HepG2 (cell line): ENCODE measurements at regions of chr17 and their contacts with region 1.

Region 1: GRCh38 chr17:75845049-75845860 is 1.1 kb upstream of the UNC13D start:
- DNase-seq: peak; percentile 86
- ATAC-seq: peak; percentile 65
- H3K4me3 ChIP-seq: peak overlapping the region; percentile 66 to 84 (median 66)
- H3K27ac ChIP-seq: peak overlapping the region; percentile 79
- H3K4me1 ChIP-seq: peaks cover 70% of the 10 kb centered on the region
- H3K27me3 ChIP-seq: no peaks in the 10 kb centered on the region
- CTCF ChIP-seq: peak; percentile 90
- EP300 ChIP-seq: peak in 1 of 2 experiments; percentile 31; a peak in 1 of 4 replicates
- POLR2A ChIP-seq: peak in 1 of 2 experiments; percentile 67; a peak in 2 of 4 replicates
- RAD21 ChIP-seq: peak; percentile 82

Region 2: GRCh38 chr17:75764711-75765421 is 80.4 kb before region 1 on chr17 and contains the start of gene GALK1:
- CTCF ChIA-PET with region 1: no interaction called
- POLR2A ChIA-PET with region 1: interaction called, 17 read pairs
- in situ Hi-C with region 1: no loop called
- intact Hi-C with region 1: no loop called
- DNase-seq: peak; percentile 59
- ATAC-seq: peak; percentile 73
- H3K4me3 ChIP-seq: peak within 1 kb of the TSS; percentile 77 to 87 (median 78)
- H3K27ac ChIP-seq: peak within 1 kb of the TSS; percentile 79
- H3K4me1 ChIP-seq: peaks cover 60% of the 10 kb centered on the region
- H3K27me3 ChIP-seq: no peaks in the 10 kb centered on the region
- CTCF ChIP-seq: peak; percentile 78
- EP300 ChIP-seq: no peak
- POLR2A ChIP-seq: peak in 1 of 2 experiments; percentile 73; a peak in 2 of 4 replicates
- RAD21 ChIP-seq: peak; percentile 46
- total RNA-seq, gene GALK1: 93.6 and 95.6 TPM in 2 replicates

Region 3: DNA sequence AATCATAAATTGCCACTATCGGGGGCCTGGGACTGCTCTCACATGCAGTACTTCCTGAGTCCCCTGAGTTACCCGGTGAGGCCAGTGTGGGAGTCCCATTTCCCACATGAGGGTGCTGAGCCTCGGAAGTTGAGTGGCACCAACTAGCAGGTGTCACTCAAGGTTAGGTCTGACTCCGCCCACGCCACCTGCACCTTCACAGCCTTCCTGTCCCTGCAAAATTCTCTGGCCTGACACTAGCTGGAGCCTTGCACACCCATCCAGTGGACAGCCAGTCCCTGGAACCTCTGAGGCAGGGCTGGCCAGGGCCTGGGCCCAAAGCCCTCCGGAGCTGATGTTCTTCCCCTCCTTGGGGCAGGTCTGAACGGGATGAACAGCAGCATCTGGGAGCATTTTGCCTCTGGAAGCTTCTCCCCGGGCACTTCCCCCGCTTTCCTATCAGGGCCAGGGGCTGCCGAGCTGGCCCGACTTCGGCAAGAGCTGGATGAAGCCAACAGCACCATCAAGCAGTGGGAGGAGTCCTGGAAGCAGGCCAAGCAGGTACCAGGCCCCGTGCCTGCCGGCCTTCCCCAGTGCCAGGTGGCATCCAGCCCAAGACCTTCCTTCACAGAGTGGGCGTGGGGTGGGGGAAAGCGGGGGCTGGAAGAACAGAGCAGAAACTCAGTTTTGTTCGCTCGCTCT is 23.0 kb before region 1 on chr17:
- CTCF ChIA-PET with region 1: interaction called, 6 read pairs
- POLR2A ChIA-PET with region 1: interaction called, 88 read pairs
- in situ Hi-C with region 1: no loop called
- intact Hi-C with region 1: no loop called
- DNase-seq: no peak
- ATAC-seq: no peak
- H3K4me3 ChIP-seq: no peak overlapping the region
- H3K27ac ChIP-seq: no peak overlapping the region
- H3K4me1 ChIP-seq: peaks cover 10% of the 10 kb centered on the region
- H3K27me3 ChIP-seq: no peaks in the 10 kb centered on the region
- CTCF ChIP-seq: no peak
- EP300 ChIP-seq: no peak
- POLR2A ChIP-seq: no peak
- RAD21 ChIP-seq: no peak

Region 4: GRCh38 chr17:75864448-75864871 is 19.2 kb after region 1 on chr17:
- CTCF ChIA-PET with region 1: interaction called, 7 read pairs
- POLR2A ChIA-PET with region 1: interaction called, 220 read pairs
- in situ Hi-C with region 1: no loop called
- intact Hi-C with region 1: no loop called
- DNase-seq: no peak
- ATAC-seq: no peak
- H3K4me3 ChIP-seq: no peak overlapping the region
- H3K27ac ChIP-seq: no peak overlapping the region
- H3K4me1 ChIP-seq: peaks cover 69% of the 10 kb centered on the region
- H3K27me3 ChIP-seq: no peaks in the 10 kb centered on the region
- CTCF ChIP-seq: no peak
- EP300 ChIP-seq: no peak
- POLR2A ChIP-seq: no peak
- RAD21 ChIP-seq: no peak

Region 5: GRCh38 chr17:75889454-75889853 is 44.2 kb after region 1 on chr17:
- CTCF ChIA-PET with region 1: no interaction called
- POLR2A ChIA-PET with region 1: interaction called, 14 read pairs
- in situ Hi-C with region 1: no loop called
- intact Hi-C with region 1: no loop called
- DNase-seq: no peak
- ATAC-seq: no peak
- H3K4me3 ChIP-seq: no peak overlapping the region
- H3K27ac ChIP-seq: no peak overlapping the region
- H3K4me1 ChIP-seq: peaks cover 44% of the 10 kb centered on the region
- H3K27me3 ChIP-seq: no peaks in the 10 kb centered on the region
- CTCF ChIP-seq: no peak
- EP300 ChIP-seq: no peak
- POLR2A ChIP-seq: no peak
- RAD21 ChIP-seq: no peak